ENCODE measurements at regions of chr2 and their contacts with region 1.

Region 1: GRCh38 chr2:231222318-231223055 is 24.1 kb downstream of the ARMC9 start:
- DNase-seq: no peak
- H3K4me3 ChIP-seq: no peak overlapping the region
- CTCF ChIP-seq: no peak

Region 2: DNA sequence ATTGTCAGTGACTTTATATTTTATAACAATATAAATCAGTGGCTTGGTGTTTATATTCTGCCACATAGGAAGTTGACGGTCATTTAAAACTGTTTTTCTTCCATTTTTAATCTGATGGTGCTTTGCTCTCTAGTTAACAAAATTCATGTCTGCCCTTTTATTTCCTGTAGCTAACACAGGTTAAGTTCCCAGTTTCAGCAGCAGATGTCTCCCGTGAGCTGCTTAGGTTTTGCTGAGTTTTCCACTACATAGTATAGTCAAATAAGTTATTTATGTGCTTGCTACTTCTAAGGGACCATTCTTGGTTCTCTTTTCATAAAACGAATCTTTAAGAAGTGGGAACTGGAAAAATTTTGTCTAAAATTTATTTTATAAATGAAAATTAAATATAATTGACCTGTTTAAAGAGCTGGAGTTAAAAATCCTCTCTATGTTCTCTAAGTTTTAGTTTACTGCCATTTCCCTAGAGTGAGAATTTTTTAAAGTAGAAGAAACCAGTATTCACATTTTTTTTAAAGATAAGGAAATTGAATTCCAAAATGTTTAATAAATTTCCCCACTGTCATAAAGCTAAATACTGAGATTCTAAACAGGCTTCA is 118.3 kb before region 1 on chr2:
- in situ Hi-C with region 1: loop called (anchors 5 kb)
- DNase-seq: peak; percentile 63
- H3K4me3 ChIP-seq: no peak overlapping the region
- CTCF ChIP-seq: peak; percentile 90

Region 3: DNA sequence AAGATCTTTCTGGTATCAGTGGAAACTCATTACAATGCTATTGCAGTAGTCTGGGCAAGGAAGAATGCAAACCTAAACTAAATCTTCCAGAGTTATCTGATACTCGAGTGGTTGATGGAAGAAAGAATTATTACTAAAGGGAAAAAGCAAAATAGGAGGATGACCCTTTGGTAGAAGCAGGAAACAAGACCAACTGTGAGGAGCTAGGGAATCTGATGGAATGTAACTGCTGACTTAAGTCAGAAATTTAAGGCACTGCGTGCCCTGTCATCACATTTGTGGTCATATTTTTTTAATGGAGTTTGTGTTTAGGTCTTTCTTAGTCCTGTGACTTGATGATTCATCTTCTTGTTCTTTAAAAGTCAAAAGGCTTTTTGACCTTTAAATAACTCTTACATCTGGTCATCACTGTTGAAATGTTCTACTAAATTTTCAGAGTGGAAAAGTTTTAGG is 60.6 kb before region 1 on chr2:
- in situ Hi-C with region 1: no loop called
- DNase-seq: peak; percentile 93
- H3K4me3 ChIP-seq: no peak overlapping the region
- CTCF ChIP-seq: no peak

Region 4: GRCh38 chr2:231297108-231297908 is 74.8 kb after region 1 on chr2:
- in situ Hi-C with region 1: no loop called
- DNase-seq: no peak
- H3K4me3 ChIP-seq: no peak overlapping the region
- CTCF ChIP-seq: peak; percentile 83

Region 5: DNA sequence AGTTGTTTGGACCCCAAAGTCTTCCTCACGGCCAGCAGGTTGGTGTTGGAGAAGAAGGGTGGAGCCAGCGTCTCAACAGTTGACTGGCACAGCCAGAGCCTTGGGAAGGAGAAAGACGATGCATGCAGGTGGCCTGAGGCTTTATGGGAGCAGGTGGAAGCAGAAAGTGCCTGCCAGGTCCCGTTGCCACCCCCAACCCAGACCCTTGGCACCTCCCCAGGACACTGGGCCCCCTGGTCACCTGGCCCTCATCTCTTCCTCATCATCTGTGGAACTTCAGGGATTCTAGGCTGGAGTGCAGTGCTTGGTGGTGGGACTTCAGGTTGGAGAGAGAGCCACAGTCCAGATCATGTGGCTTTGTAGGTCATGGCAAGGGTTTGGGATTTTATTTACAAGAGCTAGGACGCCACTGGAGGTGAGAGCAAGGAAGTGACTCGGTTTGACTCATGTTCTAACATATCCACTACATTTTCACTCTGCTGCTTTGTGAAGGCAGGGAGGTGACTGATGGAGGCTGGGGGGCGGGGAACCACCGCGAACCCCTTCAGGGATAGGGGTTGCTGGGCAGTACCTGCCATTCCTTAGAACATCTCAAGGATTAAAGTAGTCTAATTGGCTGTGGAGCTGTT is 110.5 kb after region 1 on chr2:
- in situ Hi-C with region 1: no loop called
- DNase-seq: no peak
- H3K4me3 ChIP-seq: no peak overlapping the region
- CTCF ChIP-seq: no peak

Region 6: GRCh38 chr2:232170396-232170795 is 947.9 kb after region 1 on chr2:
- in situ Hi-C with region 1: no loop called
- DNase-seq: peak; percentile 33
- H3K4me3 ChIP-seq: no peak overlapping the region
- CTCF ChIP-seq: no peak